ENCODE measurements at regions of chr14 and their contacts with region 1.

Region 1: GRCh38 chr14:63727774-63728728 is at the start of gene SGPP1:
- DNase-seq: peak; percentile 55
- ATAC-seq: peak; percentile 95
- H3K4me3 ChIP-seq: peak within 1 kb of the TSS; percentile 100
- H3K27ac ChIP-seq: peak within 1 kb of the TSS; percentile 81
- H3K4me1 ChIP-seq: no peaks in the 10 kb centered on the region
- H3K27me3 ChIP-seq: no peaks in the 10 kb centered on the region; the same call in 1 of the 2 replicates
- CTCF ChIP-seq: peak; percentile 31
- POLR2A ChIP-seq: peak; percentile 53; the same call in 1 of the 2 replicates
- RAD21 ChIP-seq: no peak; the same call in none of the 2 replicates
- total RNA-seq, gene SGPP1: 11.1 and 23.1 TPM in 2 replicates

Region 2: GRCh38 chr14:62854951-62855350 is 873.1 kb before region 1 on chr14:
- CTCF ChIA-PET with region 1: no interaction called
- POLR2A ChIA-PET with region 1: no interaction called
- dilution Hi-C with region 1: no loop called
- in situ Hi-C with region 1: no loop called
- intact Hi-C with region 1: loop called (anchors 5 kb)
- DNase-seq: no peak
- ATAC-seq: no peak
- H3K4me3 ChIP-seq: no peak overlapping the region
- H3K27ac ChIP-seq: no peak overlapping the region
- H3K4me1 ChIP-seq: no peaks in the 10 kb centered on the region
- H3K27me3 ChIP-seq: no peaks in the 10 kb centered on the region
- CTCF ChIP-seq: no peak
- POLR2A ChIP-seq: no peak
- RAD21 ChIP-seq: no peak

Region 3: DNA sequence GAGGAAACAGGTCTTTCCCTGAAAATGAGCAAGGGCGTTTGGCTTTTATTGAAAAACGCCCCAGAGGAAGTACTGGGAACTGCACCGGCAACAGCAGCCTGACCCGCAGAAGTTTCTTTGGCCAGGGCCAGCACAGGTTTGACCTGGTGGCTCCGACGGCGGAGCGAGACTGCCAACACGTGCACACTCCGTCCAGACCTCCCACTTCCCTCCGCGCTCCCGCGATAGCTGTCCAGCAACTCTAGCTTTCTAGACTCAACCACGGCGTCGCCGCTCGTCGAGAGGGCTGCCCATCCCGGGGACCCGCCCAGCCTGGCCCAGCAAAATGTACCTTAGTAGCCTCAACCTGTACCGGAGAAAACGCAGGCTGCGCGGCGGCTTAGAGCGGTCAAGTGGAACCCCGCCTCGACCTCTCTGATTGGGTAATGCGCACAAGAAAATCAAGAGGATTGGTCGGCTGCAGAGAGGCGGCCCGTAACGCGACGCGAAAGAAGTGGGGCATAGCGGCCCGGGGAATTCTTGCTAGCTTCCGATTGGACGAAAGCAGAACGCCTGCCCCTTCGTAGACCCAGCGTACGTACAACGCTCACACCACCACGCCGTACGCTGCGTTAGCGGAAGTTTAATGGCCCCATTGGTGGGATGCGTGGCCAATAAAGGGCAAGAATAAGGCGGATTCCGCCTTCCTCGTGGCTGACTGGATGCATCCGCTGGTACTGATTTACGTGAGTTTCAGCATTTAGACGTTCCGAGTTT is 86.4 kb before region 1 on chr14 and contains the start of gene WDR89:
- CTCF ChIA-PET with region 1: no interaction called
- POLR2A ChIA-PET with region 1: no interaction called
- dilution Hi-C with region 1: no loop called
- in situ Hi-C with region 1: no loop called
- intact Hi-C with region 1: loop called (anchors 2 kb)
- DNase-seq: peak; percentile 100
- ATAC-seq: peak; percentile 95
- H3K4me3 ChIP-seq: peak within 1 kb of the TSS; percentile 77
- H3K27ac ChIP-seq: peak within 1 kb of the TSS; percentile 71
- H3K4me1 ChIP-seq: no peaks in the 10 kb centered on the region
- H3K27me3 ChIP-seq: no peaks in the 10 kb centered on the region
- CTCF ChIP-seq: peak; percentile 66
- POLR2A ChIP-seq: peak; percentile 65; the same call in 1 of the 2 replicates
- RAD21 ChIP-seq: peak; percentile 51
- total RNA-seq, gene WDR89: 10.2 and 22.5 TPM in 2 replicates

Region 4: DNA sequence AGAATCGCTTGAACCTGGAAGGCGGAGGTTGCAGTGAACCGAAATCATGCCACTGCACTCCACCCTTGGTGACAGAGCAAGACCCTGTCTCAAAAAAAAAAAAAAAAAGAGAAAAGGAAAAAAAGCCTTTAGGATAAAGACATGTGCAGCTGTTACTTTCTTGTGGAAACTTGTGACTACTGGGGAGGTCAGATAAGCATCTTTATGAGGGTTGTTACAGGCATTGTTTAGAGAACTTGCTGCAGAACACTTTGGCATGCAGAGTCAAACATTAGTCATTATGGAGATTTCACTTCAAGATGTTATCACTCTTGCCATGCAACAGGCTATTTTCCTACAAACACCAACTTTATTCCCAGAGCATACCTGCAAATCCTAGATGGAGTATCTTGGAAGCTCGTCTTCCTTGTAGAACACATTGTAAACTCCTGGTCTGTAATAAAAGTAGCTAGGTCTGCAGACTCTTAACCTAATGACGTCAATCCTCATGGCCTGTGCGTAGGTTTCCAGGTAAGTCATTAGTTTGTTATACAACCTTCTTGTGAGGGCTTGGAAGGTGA is 50.1 kb before region 1 on chr14:
- CTCF ChIA-PET with region 1: no interaction called
- POLR2A ChIA-PET with region 1: no interaction called
- dilution Hi-C with region 1: no loop called
- in situ Hi-C with region 1: no loop called
- intact Hi-C with region 1: no loop called
- DNase-seq: peak; percentile 67
- ATAC-seq: peak; percentile 53; the same call in 1 of the 2 replicates
- H3K4me3 ChIP-seq: no peak overlapping the region
- H3K27ac ChIP-seq: no peak overlapping the region
- H3K4me1 ChIP-seq: peaks cover 2% of the 10 kb centered on the region
- H3K27me3 ChIP-seq: no peaks in the 10 kb centered on the region
- CTCF ChIP-seq: no peak
- POLR2A ChIP-seq: no peak
- RAD21 ChIP-seq: no peak

Region 5: DNA sequence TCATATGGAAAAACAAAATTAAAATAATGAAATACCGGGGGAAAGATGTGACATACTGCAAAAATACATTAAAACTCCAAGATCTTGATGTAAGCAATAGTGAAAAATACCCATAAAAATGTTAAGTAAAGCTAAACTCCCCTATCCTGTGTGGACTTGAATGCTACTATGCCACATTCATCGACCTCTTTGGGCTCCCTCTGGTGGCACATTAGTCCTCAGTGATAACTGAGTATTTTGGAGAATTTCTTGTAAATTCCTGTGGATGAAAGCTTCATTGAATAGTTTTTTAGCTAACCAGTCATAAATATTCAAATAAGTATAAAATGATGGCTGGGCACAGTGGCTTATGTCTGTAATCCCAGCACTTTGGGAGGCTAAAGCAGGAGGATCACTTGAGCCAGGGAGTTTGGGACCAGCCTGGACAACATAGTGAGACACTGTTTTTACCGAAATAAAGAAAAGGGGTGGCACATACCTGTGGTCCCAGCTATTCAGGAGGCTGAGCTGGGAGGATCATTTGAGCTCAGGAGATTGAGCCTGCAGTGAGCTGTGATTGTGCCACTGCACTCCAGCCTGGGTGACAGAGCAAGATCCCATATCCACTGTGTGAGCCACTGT is 42.2 kb after region 1 on chr14:
- CTCF ChIA-PET with region 1: no interaction called
- POLR2A ChIA-PET with region 1: no interaction called
- dilution Hi-C with region 1: no loop called
- in situ Hi-C with region 1: no loop called
- intact Hi-C with region 1: loop called (anchors 5 kb)
- DNase-seq: peak; percentile 62
- ATAC-seq: peak; percentile 94
- H3K4me3 ChIP-seq: no peak overlapping the region
- H3K27ac ChIP-seq: no peak overlapping the region
- H3K4me1 ChIP-seq: peaks cover 3% of the 10 kb centered on the region; the same call in 1 of the 2 replicates
- H3K27me3 ChIP-seq: no peaks in the 10 kb centered on the region; the same call in 1 of the 2 replicates
- CTCF ChIP-seq: peak; percentile 70
- POLR2A ChIP-seq: no peak
- RAD21 ChIP-seq: peak; percentile 66